Activated CD4-positive, alpha-beta T cell treated with anti-CD3 and anti-CD28 coated beads, Interleukin-2, amount 10 ng/mL, durations not matched to agents 24 days and 14 days (primary cell): ENCODE measurements at regions of chr11 and their contacts with region 1.

Region 1: DNA sequence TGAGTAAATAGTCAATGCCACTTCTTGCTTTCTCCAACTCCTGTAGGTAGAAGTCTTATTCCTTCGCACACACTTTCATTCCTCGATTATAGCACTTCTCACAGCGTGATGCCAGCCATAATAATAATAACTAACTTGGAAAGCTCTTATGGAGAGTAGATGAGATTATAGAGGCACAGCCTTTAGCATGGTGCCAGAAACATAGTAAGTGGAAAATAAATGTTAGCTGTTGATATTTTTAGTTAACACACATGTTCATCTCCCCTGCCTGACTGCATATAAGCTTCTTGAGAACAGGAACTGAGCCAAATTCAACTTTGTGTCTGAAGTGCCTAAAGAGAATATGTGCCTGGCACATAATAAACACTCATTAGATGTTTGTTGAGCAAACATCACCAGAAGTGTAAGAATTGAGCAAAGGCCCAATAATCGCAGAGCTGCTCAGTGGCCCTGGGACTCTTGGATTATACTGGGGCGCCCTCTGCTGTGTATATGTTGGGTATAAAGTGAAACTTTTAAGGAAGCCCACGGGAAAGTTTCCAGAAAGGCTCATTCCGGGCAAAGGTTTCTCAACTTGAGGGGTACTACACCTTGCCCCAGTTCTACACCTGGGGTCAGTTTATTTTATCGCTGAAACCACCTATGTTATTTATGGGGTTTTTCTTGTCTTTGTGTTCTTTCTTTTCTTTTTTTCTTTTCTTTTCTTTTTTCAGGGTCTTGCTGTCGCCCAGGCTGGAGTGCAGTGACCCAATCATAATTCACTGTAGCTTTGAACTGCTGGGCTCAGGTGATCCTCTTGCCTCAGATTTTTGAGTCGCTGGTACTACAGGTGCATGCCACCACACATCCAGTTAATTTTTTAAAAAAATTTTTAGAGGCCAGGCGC is 22.3 kb downstream of the SLN start:
- DNase-seq: peak; percentile 88
- H3K4me3 Mint-ChIP-seq: no peak overlapping the region
- H3K27ac Mint-ChIP-seq: no peak overlapping the region
- H3K4me1 Mint-ChIP-seq: no peaks in the 10 kb centered on the region
- H3K27me3 Mint-ChIP-seq: peaks cover 9% of the 10 kb centered on the region

Region 2: GRCh38 chr11:106568632-106569031 is 1120.9 kb before region 1 on chr11:
- intact Hi-C with region 1: no loop called
- DNase-seq: no peak
- H3K4me3 Mint-ChIP-seq: no peak overlapping the region
- H3K27ac Mint-ChIP-seq: no peak overlapping the region
- H3K4me1 Mint-ChIP-seq: no peaks in the 10 kb centered on the region
- H3K27me3 Mint-ChIP-seq: no peaks in the 10 kb centered on the region

Region 3: DNA sequence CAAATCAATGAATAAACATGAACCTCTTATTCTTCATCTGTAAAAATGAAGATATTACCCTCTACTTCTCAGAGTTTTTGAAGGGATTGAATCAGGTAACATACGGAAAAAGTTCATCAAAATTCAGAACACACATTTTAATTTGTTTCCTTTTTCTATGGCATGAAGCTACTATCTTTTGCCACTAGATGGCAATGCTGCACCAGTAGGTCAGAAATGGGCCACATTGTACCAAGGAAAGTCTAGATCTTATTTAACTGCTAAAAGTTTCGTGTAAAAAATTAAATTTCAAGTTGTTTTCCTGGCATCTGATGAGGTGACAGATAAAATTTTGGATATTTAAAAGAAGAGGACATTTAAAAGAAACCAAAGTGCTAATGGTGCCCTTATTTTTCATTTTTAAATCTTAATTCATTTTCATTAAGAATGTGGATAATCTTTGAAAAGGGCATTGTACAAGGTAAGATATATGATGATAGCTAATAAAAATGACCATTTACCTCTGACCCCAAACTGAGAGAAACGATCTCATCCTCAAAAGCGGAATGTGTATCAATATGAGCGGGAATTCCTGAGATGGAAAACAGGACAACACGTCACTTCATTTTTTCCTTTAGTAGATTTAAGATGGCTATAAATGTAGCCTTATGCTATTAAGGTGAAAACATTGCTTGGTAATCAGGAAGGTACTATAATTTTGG is 140.2 kb before region 1 on chr11:
- intact Hi-C with region 1: loop called (anchors 1 kb)
- DNase-seq: peak; percentile 79
- H3K4me3 Mint-ChIP-seq: no peak overlapping the region
- H3K27ac Mint-ChIP-seq: no peak overlapping the region
- H3K4me1 Mint-ChIP-seq: peaks cover 11% of the 10 kb centered on the region
- H3K27me3 Mint-ChIP-seq: no peaks in the 10 kb centered on the region

Region 4: GRCh38 chr11:108037636-108038035 is 348.1 kb after region 1 on chr11:
- intact Hi-C with region 1: no loop called
- DNase-seq: no peak
- H3K4me3 Mint-ChIP-seq: no peak overlapping the region
- H3K27ac Mint-ChIP-seq: no peak overlapping the region
- H3K4me1 Mint-ChIP-seq: peaks cover 10% of the 10 kb centered on the region
- H3K27me3 Mint-ChIP-seq: no peaks in the 10 kb centered on the region

Region 5: GRCh38 chr11:108319541-108320145 is 630.1 kb after region 1 on chr11:
- intact Hi-C with region 1: no loop called
- DNase-seq: no peak
- H3K4me3 Mint-ChIP-seq: no peak overlapping the region
- H3K27ac Mint-ChIP-seq: no peak overlapping the region
- H3K4me1 Mint-ChIP-seq: no peaks in the 10 kb centered on the region
- H3K27me3 Mint-ChIP-seq: no peaks in the 10 kb centered on the region